Cardiac septum (tissue), 1 donor: ENCODE measurements at regions of chr19 and their contacts with region 1.

Region 1: DNA sequence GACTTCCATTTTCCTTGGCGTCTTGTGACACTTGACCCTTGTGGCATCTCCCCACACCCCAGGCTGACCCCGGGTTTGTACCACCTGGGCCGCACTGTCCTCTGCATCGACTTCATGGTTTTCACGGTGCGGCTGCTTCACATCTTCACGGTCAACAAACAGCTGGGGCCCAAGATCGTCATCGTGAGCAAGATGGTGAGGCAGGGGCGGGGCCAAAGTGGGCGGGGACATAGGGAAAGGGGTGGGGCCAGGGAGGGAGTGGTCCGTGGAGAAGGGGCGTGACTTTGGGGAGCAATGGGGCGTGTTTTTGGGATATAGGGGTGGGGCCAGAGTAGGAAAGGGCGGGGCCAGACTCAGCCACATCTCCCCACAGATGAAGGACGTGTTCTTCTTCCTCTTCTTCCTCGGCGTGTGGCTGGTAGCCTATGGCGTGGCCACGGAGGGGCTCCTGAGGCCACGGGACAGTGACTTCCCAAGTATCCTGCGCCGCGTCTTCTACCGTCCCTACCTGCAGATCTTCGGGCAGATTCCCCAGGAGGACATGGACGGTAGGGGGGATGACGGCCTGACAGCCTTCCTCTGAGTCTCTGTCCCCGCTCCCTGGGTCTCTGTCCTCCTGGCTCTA is 42.8 kb downstream of the TRPM4 start:
- DNase-seq: no peak

Region 2: GRCh38 chr19:48993175-48994034 is 206.9 kb before region 1 on chr19 and contains the starts of genes GYS1 and RUVBL2:
- intact Hi-C with region 1: loop called (anchors 10 kb)
- DNase-seq: peak; percentile 100
- total RNA-seq, gene GYS1: 175 TPM
- total RNA-seq, gene RUVBL2: 39.2 TPM

Region 3: GRCh38 chr19:49097455-49098288 is 102.7 kb before region 1 on chr19:
- intact Hi-C with region 1: loop called (anchors 2 kb)
- DNase-seq: peak; percentile 84